Cardiac septum (tissue), 1 donor: ENCODE measurements at regions of chr20 and their contacts with region 1.

Region 1: DNA sequence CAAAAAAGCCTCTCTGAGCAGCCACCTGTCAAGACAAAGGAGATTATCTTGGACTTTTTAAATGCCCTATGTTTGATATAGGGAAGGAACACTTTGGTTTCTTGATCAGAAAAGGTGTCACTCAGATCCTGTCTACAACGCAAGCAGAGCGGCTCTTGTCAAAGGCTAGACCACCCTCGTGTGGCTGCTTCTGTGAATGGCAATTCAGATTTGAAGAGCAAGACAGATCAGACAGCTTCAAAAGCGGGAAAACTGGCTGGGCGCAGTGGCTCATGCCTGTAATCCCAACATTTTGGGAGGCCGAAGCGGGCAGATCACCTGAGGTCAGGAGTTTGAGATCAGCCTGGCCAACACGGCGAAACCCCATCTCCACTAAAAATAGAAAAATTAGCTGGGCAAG is 10.1 kb upstream of the NXT1 start:
- DNase-seq: no peak

Region 2: DNA sequence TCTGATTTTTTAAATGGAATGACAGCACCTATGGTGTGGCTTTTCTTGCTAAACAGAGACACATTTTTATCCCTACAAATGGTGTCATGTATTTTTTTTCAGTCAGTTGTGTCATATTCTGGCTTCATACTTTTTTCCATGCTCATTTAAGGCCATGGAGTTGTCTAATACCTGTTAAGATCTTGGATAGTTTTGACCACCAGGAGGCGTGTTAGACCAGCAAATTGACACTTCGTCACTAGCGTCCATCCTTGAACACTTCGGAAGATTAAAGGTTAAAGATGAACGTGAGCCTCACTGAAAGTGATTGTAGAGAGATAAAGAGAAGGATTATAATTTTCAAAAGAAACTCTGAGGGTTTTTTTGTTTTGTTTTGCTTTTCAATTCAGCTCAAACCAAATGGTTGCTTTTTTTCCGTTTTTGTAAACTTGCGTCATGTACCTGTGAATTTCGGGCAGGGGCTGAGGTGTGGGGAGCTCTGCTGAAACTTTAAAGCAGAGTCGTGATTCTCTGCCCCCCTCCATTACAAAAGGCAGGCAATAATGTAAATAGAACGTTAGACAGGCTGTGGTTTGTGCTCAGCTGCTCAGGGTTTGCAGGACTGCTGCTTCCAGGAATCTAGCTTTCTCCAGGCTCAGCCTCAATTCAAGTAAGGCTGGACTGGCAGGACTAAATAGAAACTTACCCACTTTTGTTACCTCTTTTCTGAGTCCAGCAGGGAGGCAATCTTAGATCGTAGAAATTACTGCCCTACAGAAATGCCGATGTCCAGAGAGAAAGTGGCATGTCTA is 1001.2 kb before region 1 on chr20:
- intact Hi-C with region 1: loop called (anchors 5 kb)
- DNase-seq: no peak

Region 3: DNA sequence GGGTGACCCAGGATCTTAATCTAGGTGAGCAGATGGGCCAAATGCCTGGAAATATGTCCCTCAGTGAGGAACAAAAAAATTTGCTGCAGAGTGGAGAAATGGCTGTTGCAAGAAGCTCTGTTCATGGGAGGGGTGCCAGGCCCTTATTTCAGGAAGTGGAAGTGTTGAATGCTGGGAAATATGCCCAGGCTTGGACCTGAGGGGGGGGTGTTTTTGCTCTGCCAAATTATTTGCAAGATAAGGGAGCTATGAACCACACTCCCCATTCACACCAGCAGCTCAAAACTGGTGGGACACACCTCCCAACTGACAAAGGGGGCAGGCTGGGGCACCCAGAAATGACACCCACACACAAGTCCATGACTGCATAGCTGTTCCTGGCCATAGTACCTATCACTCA is 339.6 kb after region 1 on chr20:
- intact Hi-C with region 1: no loop called
- DNase-seq: peak; percentile 54